Activated CD4-positive, alpha-beta T cell treated with anti-CD3 and anti-CD28 coated beads, Interleukin-2, amount 10 ng/mL, durations not matched to agents 24 days and 14 days (primary cell): ENCODE measurements at regions of chr3 and their contacts with region 1.

Region 1: GRCh38 chr3:113696658-113697499 is 437 bp upstream of the USF3 start:
- DNase-seq: peak; percentile 100
- H3K4me3 Mint-ChIP-seq: no peak overlapping the region
- H3K27ac Mint-ChIP-seq: no peak overlapping the region
- H3K4me1 Mint-ChIP-seq: peaks cover 27% of the 10 kb centered on the region
- H3K27me3 Mint-ChIP-seq: no peaks in the 10 kb centered on the region

Region 2: GRCh38 chr3:112561731-112562688 is 1134.9 kb before region 1 on chr3 and contains the starts of genes ATG3 and SLC35A5:
- intact Hi-C with region 1: loop called (anchors 1 kb)
- DNase-seq: peak; percentile 100
- H3K4me3 Mint-ChIP-seq: peak within 1 kb of the TSS; percentile 98
- H3K27ac Mint-ChIP-seq: peak within 1 kb of the TSS; percentile 99
- H3K4me1 Mint-ChIP-seq: peaks cover 24% of the 10 kb centered on the region
- H3K27me3 Mint-ChIP-seq: no peaks in the 10 kb centered on the region
- total RNA-seq, gene ATG3: 66.9 and 69.1 TPM in 2 replicates
- total RNA-seq, gene SLC35A5: 15.5 and 16.3 TPM in 2 replicates

Region 3: GRCh38 chr3:113275929-113276750 is 420.7 kb before region 1 on chr3:
- intact Hi-C with region 1: no loop called
- DNase-seq: no peak
- H3K4me3 Mint-ChIP-seq: peak overlapping the region; percentile 59
- H3K27ac Mint-ChIP-seq: peak overlapping the region; percentile 19
- H3K4me1 Mint-ChIP-seq: peaks cover 7% of the 10 kb centered on the region
- H3K27me3 Mint-ChIP-seq: no peaks in the 10 kb centered on the region

Region 4: DNA sequence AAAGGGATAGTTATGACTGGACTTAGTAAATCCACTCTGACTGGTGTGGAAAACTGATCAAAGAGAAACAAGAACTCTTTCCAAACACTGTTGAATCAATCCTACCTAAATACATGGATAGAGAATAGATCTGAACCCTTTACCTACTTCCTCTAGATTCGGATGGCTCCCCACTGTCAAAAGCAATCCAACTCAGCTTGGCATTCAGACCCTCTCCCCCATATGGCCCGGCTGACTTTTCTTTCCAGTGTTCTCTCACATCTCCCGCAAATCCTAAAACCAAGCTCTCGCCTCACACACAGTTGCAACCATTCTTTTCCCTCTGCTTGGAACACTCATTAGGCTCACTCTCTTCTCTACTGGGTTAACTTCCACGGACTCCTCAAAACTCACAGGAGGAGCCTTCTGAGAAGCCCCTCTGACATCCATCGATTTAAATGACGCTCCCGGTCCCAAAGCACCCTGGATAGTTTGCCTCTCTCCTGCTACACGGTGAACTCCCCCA is 182.6 kb before region 1 on chr3:
- intact Hi-C with region 1: loop called (anchors 1 kb)
- DNase-seq: no peak
- H3K4me3 Mint-ChIP-seq: no peak overlapping the region
- H3K27ac Mint-ChIP-seq: no peak overlapping the region
- H3K4me1 Mint-ChIP-seq: peaks cover 13% of the 10 kb centered on the region
- H3K27me3 Mint-ChIP-seq: peaks cover 26% of the 10 kb centered on the region

Region 5: DNA sequence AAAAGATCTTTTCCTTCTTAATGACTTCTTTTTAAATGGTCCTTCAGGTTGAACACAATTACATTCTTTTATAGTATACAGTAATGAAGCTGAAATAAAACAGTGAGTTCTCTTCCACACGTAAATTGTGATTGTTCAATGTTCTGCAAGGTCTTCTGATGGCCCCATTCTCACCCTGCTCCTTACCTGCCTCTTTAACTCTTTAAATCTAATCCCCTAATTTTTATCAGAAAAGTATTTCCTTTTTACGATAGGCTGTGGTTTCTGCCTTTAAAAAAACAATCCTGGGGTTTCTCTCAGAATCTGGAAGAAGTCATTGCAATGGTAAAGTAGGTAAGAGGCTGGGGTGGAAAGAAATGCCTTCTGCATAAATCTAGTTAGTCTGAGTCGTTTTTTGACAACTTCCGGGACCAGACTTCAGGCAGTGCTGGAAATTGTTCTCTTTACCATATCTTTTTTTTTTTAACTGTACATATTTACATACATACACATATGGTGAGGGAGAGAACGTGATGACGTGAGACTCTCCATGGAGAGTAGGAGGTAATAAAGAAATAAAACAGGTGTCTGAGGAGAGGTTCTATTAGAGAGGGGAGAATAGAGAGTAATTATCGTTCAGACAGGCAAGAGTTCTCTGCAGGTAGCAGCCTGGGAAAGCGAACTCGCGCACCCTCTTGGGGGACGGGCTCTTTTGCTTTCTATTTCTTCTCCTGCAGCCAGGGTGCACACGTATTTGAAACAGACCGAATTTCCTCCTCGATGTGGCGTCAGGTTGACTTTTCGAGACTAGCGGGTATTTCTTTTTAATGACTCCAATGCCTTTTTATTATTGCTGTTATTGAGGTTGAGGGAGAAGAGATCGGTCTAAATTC is 164.8 kb before region 1 on chr3 and contains the start of gene SIDT1:
- intact Hi-C with region 1: loop called (anchors 1 kb)
- DNase-seq: peak; percentile 92
- H3K4me3 Mint-ChIP-seq: peak within 1 kb of the TSS; percentile 91
- H3K27ac Mint-ChIP-seq: peak within 1 kb of the TSS; percentile 96
- H3K4me1 Mint-ChIP-seq: peaks cover 36% of the 10 kb centered on the region
- H3K27me3 Mint-ChIP-seq: peaks cover 11% of the 10 kb centered on the region
- total RNA-seq, gene SIDT1: 8.5 and 11.5 TPM in 2 replicates

Region 6: DNA sequence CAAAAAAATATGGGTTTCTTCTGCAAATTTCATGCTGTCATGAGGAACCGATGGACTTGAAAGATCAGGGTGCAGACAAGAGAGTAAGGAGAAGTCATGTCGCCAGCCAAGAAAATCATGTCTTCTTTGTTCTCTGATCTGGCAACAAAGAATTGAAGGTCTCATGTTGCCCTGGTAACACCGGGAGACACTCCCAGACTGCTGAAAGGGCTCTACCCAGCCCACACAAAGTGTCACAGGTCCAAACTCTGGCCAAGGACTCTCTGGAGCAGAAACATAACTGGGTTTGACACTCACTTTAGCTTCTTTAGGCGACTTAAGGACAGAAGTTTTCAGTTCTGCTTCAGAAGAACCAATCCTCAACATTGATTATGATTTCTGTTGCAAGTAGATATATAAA is 121.7 kb before region 1 on chr3:
- intact Hi-C with region 1: no loop called
- DNase-seq: no peak
- H3K4me3 Mint-ChIP-seq: no peak overlapping the region
- H3K27ac Mint-ChIP-seq: no peak overlapping the region
- H3K4me1 Mint-ChIP-seq: peaks cover 5% of the 10 kb centered on the region
- H3K27me3 Mint-ChIP-seq: no peaks in the 10 kb centered on the region

Region 7: GRCh38 chr3:113606539-113607218 is 90.2 kb before region 1 on chr3:
- intact Hi-C with region 1: loop called (anchors 5 kb)
- DNase-seq: peak; percentile 85
- H3K4me3 Mint-ChIP-seq: peak overlapping the region; percentile 55
- H3K27ac Mint-ChIP-seq: peak overlapping the region; percentile 27
- H3K4me1 Mint-ChIP-seq: peaks cover 18% of the 10 kb centered on the region
- H3K27me3 Mint-ChIP-seq: no peaks in the 10 kb centered on the region

Region 8: GRCh38 chr3:113668015-113668414 is 28.9 kb before region 1 on chr3:
- intact Hi-C with region 1: no loop called
- DNase-seq: no peak
- H3K4me3 Mint-ChIP-seq: no peak overlapping the region
- H3K27ac Mint-ChIP-seq: no peak overlapping the region
- H3K4me1 Mint-ChIP-seq: peaks cover 11% of the 10 kb centered on the region
- H3K27me3 Mint-ChIP-seq: no peaks in the 10 kb centered on the region

Region 9: DNA sequence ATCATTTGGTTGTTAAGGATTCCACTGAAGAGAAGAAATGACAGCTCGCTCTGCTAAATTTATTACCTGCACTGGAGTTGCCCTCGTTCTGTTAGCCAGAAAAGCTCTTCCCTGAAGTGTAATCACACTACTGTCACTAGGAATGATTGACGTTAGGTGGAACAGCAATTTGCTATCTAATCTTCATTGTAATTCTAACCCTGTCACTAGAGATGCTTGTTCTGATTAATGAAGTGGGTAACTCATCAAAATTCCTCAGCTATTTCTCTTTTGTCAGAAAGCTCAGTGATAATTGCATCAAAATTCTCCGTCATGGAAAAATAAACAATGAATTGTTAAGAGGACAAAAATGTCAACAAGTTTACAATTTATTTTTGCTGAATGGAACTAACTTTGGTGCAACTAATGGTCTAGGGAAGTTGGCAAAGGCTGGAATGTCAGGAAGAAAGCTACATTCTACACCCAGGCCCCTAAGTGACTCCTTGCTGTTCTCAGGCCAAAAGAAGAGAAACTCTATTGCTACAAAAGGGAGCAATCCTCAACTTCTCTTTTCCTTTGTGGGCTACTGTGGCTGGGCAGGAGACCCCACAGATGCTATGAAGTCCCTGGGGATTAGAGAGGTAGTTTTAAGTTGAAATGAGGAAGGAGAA is 325.4 kb after region 1 on chr3:
- intact Hi-C with region 1: no loop called
- DNase-seq: no peak
- H3K4me3 Mint-ChIP-seq: no peak overlapping the region
- H3K27ac Mint-ChIP-seq: no peak overlapping the region
- H3K4me1 Mint-ChIP-seq: peaks cover 2% of the 10 kb centered on the region
- H3K27me3 Mint-ChIP-seq: no peaks in the 10 kb centered on the region